ENCODE measurements at regions of chr2 and their contacts with region 1.

Region 1: GRCh38 chr2:101883863-101884262 is 107.9 kb upstream of the IL1R2 start:
- DNase-seq: peak; percentile 50
- H3K4me3 ChIP-seq: no peak overlapping the region
- H3K27ac ChIP-seq: no peak overlapping the region
- H3K4me1 ChIP-seq: no peaks in the 10 kb centered on the region
- H3K27me3 ChIP-seq: no peaks in the 10 kb centered on the region
- CTCF ChIP-seq: peak; percentile 50

Region 2: DNA sequence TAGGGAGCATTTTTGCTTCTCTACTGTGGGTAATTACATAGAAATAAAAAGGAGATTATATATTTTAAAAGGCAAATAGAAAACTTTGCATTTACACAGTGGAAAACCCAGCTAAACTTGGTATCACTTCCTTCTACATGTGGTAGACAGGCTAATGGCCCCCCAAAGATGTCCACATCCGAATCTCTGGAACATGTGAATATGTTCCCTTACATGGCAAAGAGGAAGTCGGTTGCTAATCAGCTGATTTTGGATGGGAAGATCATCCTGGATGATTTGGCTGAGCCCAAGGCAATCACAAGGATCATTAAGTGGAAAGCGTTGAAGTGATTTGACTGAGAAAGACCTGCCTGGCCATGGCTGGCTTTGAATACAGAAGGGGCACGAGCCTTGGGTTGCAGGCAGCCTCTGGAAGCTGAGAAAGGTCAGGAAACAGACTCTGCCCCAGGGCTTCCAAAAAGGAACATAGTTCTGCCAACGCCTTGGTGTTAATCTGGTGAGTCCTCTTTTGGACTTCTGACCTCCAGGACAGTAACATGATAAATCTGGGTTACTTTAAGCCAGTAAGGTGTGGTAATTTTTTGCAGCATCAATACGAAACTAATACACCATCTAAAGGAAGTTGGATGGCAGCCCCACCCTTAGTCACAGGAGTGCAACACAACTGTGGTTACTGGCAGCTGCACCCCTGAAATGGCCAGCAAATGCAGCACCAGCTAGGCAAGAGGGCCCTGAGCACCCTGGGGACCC is 522.6 kb before region 1 on chr2:
- intact Hi-C with region 1: no loop called
- DNase-seq: no peak
- H3K4me3 ChIP-seq: no peak overlapping the region
- H3K27ac ChIP-seq: no peak overlapping the region
- H3K4me1 ChIP-seq: no peaks in the 10 kb centered on the region
- H3K27me3 ChIP-seq: no peaks in the 10 kb centered on the region
- CTCF ChIP-seq: no peak

Region 3: DNA sequence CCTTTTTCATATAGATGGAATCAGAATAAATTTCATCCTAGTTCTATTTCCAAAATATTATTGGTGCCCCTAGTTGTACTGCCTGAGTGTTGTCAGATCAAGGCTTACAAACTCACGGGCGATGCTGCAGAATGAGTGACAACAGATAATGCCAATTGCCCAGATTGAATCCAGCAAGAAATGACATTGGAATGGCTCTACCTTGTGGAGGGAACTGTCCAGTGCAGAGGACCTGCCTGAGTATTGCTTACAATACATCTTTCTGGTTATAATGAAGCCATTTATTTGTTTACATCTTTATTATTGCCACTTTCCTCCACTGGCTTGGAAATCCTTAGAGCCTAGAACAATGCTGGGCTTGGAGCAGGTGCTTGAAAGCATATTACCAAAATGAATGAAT is 100.1 kb after region 1 on chr2:
- intact Hi-C with region 1: loop called (anchors 5 kb)
- DNase-seq: no peak
- H3K4me3 ChIP-seq: no peak overlapping the region
- H3K27ac ChIP-seq: no peak overlapping the region
- H3K4me1 ChIP-seq: peaks cover 13% of the 10 kb centered on the region
- H3K27me3 ChIP-seq: no peaks in the 10 kb centered on the region
- CTCF ChIP-seq: peak; percentile 21